ENCODE measurements at regions of chr12 and their contacts with region 1.

Region 1: DNA sequence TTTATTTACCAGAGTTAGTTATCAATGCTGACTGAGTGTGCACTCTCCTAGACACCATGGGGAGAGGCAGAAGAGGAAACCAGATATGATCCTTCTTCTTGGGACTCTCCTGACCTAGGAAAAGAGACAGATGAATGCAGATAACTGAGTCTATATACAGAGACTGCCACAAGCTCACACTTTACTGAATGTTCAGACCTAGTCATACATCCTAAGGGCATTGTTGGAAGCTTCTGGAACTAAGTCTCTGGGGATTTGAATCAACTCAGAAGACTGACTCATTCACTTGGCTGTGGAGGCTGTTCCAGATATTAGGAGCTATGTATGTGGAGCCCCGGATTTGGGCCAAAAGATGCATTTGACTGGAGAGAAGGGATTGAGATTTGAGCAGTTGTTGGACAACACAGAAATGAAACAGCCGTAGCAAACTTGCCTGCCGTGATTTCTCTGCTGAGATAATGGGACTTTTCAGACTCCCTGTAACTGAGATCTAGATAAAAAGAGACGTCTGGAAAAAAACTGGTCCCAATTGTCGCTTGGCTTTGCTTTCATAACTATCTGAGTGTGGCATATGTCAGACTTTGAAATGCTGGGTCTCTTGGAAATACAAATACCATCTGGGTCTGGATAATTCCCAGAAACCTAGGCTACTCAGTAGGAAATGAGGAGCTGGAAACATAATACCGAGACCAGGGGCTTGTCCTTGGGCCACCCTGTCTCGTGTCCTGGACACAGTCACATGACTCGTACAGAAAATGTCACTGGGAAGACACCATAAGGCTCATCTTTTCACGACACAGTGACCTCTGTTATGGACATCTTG is 396.8 kb downstream of the NUAK1 start:
- DNase-seq: no peak
- ATAC-seq: peak; percentile 45

Region 2: DNA sequence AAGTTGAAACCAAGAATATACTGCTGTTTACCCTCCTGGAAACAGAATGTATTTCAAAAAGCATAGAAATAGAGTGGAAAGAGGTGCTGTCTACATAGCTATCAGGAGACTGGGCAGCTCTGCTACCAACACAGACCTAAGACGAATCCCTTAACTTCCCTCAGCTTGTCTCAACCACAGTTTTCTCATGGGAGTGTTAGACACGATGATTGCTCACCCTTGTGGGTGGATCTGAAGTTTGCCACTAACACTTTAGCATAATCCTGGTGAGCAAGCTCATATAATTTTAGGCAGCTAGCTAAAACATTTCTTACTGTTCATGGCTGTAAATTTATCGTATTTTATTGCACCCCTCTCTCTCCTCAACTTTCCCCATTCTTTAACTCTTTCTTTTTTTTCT is 372.9 kb before region 1 on chr12:
- intact Hi-C with region 1: no loop called
- DNase-seq: no peak
- ATAC-seq: no peak

Region 3: GRCh38 chr12:105641749-105642148 is 100.2 kb before region 1 on chr12:
- intact Hi-C with region 1: no loop called
- DNase-seq: no peak
- ATAC-seq: no peak

Region 4: DNA sequence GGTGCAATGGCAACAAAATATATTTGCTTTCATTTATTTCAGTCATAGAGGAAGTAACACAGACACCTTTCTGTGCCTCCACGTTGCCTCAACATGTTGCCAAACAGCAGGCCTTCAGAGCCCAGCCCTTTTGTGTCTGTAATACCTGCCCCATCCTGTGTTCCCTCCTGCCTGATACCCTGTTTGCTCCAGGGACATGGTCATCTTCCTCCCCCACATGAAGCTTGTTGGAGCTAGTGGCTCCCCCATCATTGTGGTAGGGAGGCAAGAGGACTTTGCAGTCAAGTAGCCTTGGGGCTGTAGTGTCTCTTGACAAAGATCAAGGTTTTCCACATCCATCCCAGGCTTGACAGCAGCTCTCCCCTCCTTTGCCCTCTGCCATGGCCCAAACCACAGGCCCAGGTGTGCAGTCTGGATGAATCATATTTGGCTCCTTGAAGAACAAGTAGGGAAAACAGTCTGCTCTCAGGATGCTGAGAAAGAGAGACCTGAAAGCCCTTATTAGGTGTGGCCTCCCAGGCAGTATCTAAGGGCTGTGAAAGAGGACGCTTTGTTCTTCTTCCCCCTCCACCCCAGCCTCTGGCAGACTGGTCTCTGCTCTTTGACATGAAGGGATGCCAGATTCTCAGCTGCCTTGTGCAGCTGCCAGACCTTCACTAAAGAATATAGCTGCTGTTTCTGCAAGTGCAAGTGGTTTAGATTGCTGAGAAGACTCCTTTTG is 82.4 kb before region 1 on chr12:
- intact Hi-C with region 1: loop called (anchors 5 kb)
- DNase-seq: no peak
- ATAC-seq: peak; percentile 85

Measured in Right ventricle myocardium inferior (tissue), 1 donor.